Panc1 (cell line): ENCODE measurements at regions of chr7 and their contacts with region 1.

Region 1: DNA sequence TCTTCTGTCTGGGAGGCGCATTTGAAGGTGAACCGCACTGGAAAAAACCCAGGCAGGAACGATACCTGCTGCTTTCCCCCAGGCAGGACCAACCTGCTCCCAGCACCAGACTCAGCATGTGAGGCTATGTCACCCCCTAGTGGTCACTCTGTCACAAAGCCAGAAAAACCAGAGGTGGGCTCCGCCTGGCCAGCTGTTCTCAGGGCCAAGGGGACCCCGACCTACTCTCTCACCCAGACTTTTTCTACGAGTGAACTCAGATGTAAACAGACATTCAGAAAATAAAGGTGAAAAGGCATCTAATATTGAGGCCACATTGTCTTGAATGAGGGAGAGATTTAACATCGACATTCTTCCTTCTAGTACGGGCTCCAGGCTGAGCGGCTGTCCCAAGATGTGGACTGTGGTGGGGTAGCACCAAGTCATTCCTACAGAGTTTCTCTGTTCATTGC is 117.3 kb downstream of the PRKAG2 start:
- DNase-seq: no peak
- ATAC-seq: peak; percentile 81
- H3K4me3 ChIP-seq: no peak overlapping the region
- H3K27ac ChIP-seq: peak overlapping the region; percentile 85; the same call in 1 of the 2 replicates
- H3K4me1 ChIP-seq: peaks cover 50% of the 10 kb centered on the region
- H3K27me3 ChIP-seq: no peaks in the 10 kb centered on the region
- CTCF ChIP-seq: peak; percentile 96

Region 2: GRCh38 chr7:151368136-151368571 is 391.5 kb before region 1 on chr7:
- CTCF ChIA-PET with region 1: no interaction called
- POLR2A ChIA-PET with region 1: no interaction called
- in situ Hi-C with region 1: no loop called
- intact Hi-C with region 1: loop called (anchors 1 kb)
- DNase-seq: peak; percentile 64
- ATAC-seq: peak; percentile 100
- H3K4me3 ChIP-seq: no peak overlapping the region
- H3K27ac ChIP-seq: peak overlapping the region; percentile 52; the same call in 1 of the 2 replicates
- H3K4me1 ChIP-seq: peaks cover 13% of the 10 kb centered on the region
- H3K27me3 ChIP-seq: no peaks in the 10 kb centered on the region
- CTCF ChIP-seq: peak; percentile 96

Region 3: GRCh38 chr7:151459726-151460473 is 299.7 kb before region 1 on chr7:
- CTCF ChIA-PET with region 1: no interaction called
- POLR2A ChIA-PET with region 1: no interaction called
- in situ Hi-C with region 1: no loop called
- intact Hi-C with region 1: loop called (anchors 10 kb)
- DNase-seq: peak; percentile 76
- ATAC-seq: peak; percentile 84
- H3K4me3 ChIP-seq: peak overlapping the region; percentile 7 to 45; a peak in 3 of 4 replicates
- H3K27ac ChIP-seq: peak overlapping the region; percentile 98
- H3K4me1 ChIP-seq: peaks cover 50% of the 10 kb centered on the region
- H3K27me3 ChIP-seq: no peaks in the 10 kb centered on the region
- CTCF ChIP-seq: no peak; the same call in 1 of the 2 replicates

Region 4: GRCh38 chr7:151570366-151570915 is 189.2 kb before region 1 on chr7:
- CTCF ChIA-PET with region 1: no interaction called
- POLR2A ChIA-PET with region 1: no interaction called
- in situ Hi-C with region 1: no loop called
- intact Hi-C with region 1: loop called (anchors 5 kb)
- DNase-seq: no peak
- ATAC-seq: no peak
- H3K4me3 ChIP-seq: no peak overlapping the region
- H3K27ac ChIP-seq: no peak overlapping the region
- H3K4me1 ChIP-seq: no peaks in the 10 kb centered on the region; the same call in 1 of the 2 replicates
- H3K27me3 ChIP-seq: no peaks in the 10 kb centered on the region
- CTCF ChIP-seq: peak; percentile 51; the same call in 1 of the 2 replicates